Activated naive CD4-positive, alpha-beta T cell treated with anti-CD3 and anti-CD28 coated beads for 36 hours (primary cell): ENCODE measurements at regions of chr6 and their contacts with region 1.

Region 1: DNA sequence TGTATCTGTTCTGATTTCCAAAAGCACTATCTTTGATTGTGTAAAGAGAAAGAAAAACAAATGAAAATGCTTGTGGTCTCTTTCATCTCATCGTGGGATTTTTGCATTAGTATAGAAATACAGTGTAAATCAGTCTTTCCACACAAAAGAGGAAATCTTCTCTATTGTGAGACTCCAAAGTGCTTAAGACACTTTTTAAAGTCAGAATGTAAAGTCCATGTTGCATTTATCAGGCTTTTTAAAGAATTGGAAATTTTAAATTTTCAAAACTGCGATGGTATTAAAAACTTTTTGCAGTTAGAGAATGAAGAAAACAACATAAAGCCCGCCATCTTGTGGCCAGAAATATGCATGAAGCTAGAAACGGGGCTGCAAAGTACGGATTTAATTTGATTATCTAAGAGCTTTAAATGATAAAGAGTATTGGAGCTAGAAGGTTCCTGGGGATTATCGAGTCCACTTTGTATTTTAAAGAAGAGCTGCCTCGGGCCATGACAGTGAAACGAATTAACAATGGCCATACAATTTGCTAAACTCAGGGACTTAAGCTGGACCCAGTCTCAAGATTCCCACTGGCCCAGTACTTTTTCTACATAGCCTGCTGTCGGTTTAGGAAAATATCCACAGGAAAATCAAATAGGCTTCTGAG is 339.6 kb downstream of the ARHGAP18 start:
- DNase-seq: peak; percentile 77
- H3K4me3 Mint-ChIP-seq: no peak overlapping the region
- H3K27ac Mint-ChIP-seq: no peak overlapping the region
- H3K4me1 Mint-ChIP-seq: peaks cover 20% of the 10 kb centered on the region
- H3K27me3 Mint-ChIP-seq: no peaks in the 10 kb centered on the region

Region 2: DNA sequence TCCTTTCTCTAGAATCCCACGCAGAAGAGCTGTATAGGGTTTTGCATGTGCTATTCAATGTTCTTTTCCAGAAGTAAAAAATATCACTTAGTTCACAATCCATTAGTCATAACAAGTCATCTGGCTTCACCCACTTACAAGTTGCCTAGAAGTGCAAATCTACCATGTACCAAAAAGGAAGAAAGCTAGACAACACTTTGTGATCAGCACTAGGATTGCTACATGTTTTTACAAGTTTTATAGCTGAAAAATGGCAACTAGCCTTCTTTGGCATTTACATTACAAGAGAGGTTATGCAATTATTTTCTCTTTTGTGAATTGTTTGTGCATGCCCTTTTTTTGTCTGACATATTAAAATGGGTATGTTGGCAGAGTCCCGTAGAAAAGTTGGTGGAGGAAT is 764.4 kb before region 1 on chr6:
- CTCF ChIA-PET with region 1: no interaction called
- intact Hi-C with region 1: no loop called
- DNase-seq: no peak
- H3K4me3 Mint-ChIP-seq: no peak overlapping the region
- H3K27ac Mint-ChIP-seq: no peak overlapping the region
- H3K4me1 Mint-ChIP-seq: peaks cover 2% of the 10 kb centered on the region
- H3K27me3 Mint-ChIP-seq: peaks cover 8% of the 10 kb centered on the region

Region 3: DNA sequence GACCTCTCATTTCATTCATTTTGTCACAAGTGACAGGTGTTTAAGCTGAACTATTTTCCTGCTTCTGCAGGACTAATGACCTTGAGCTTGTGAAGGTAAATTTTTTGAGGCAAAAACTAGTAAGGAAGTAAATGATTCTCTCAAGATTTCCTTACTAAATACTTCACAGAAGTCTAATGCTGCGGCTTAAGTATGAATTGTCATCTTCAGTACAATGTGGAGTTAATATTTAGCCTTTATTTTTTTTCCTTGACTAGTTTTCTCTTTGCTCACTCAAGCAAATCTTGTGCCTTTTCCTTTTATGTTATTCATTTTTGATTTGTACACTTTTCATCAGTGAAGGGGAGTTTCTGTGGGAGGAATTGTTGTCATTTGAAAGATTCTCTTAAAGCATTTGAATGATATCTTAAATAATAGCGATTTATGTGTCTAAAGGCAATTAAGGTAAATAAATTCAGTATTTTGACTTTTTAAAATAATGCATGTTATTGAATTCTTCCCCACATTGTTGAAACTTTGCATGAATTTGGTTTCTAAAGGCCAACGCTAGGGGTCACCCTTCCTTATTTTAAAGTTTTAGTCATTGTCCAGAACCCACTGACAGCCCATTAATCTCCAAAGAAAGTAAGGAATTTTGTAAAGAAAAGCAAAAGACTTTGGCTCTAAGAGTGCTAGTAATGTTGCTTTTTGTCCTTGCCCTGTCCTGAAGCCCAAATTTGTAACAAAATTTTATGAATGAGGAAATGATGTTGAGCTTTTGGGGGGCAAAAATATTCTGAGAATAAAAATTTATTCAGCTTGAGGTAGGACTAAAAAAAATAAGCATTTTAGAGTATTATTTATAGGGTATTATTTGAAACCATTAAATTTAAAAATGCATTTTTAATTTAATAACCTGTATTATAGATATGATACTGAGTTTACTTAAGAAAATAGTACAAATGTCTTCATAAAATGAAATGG is 644.8 kb before region 1 on chr6:
- CTCF ChIA-PET with region 1: no interaction called
- intact Hi-C with region 1: loop called (anchors 2 kb)
- DNase-seq: peak; percentile 31
- H3K4me3 Mint-ChIP-seq: no peak overlapping the region
- H3K27ac Mint-ChIP-seq: no peak overlapping the region
- H3K4me1 Mint-ChIP-seq: no peaks in the 10 kb centered on the region
- H3K27me3 Mint-ChIP-seq: peaks cover 24% of the 10 kb centered on the region

Region 4: DNA sequence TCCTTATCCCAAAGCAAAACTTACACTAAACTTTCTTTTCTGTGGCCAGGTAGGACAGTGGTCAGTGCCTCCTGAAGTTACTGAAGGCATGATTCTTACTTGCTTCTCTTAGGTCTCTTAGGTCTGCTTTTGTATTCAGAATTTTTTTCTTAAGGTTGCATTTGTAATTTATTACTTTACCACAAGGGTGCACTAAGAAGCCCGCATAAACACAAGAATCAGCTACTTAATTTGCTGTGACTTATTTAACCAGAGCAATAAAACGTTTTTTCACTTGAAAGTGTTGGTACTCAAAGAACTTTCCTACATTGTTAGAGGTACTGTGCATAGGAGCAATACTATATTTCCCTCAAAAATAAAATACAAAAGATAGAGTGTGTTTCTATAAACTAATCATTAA is 562.8 kb before region 1 on chr6:
- CTCF ChIA-PET with region 1: no interaction called
- intact Hi-C with region 1: loop called (anchors 1 kb)
- DNase-seq: no peak
- H3K4me3 Mint-ChIP-seq: no peak overlapping the region
- H3K27ac Mint-ChIP-seq: no peak overlapping the region
- H3K4me1 Mint-ChIP-seq: no peaks in the 10 kb centered on the region
- H3K27me3 Mint-ChIP-seq: peaks cover 9% of the 10 kb centered on the region

Region 5: DNA sequence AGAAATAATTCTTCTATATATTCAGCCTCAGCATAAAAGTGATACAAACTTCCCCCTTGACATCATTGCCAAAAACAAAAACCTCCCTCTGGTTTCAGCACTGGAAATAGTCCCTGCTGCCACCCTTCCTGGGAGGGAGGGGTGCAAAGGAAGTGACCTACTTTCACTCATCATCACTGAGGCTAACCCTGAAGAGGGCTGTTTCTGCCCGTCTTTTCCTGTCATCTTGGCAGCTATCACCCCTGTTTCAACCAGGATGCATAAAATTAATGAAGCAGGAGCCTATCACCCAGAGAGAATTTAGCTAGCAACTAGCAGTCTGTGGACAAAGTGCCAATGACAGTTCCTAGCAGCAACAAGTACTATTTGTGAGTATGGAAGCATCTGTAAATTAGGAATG is 89.6 kb before region 1 on chr6:
- CTCF ChIA-PET with region 1: interaction called, 6 read pairs
- intact Hi-C with region 1: loop called (anchors 2 kb)
- DNase-seq: peak; percentile 76
- H3K4me3 Mint-ChIP-seq: peak overlapping the region; percentile 52
- H3K27ac Mint-ChIP-seq: peak overlapping the region; percentile 10
- H3K4me1 Mint-ChIP-seq: peaks cover 14% of the 10 kb centered on the region
- H3K27me3 Mint-ChIP-seq: no peaks in the 10 kb centered on the region

Region 6: GRCh38 chr6:129567374-129567773 is 197.0 kb after region 1 on chr6:
- CTCF ChIA-PET with region 1: interaction called, 4 read pairs
- intact Hi-C with region 1: loop called (anchors 1 kb)
- DNase-seq: peak; percentile 79
- H3K4me3 Mint-ChIP-seq: no peak overlapping the region
- H3K27ac Mint-ChIP-seq: no peak overlapping the region
- H3K4me1 Mint-ChIP-seq: peaks cover 3% of the 10 kb centered on the region
- H3K27me3 Mint-ChIP-seq: no peaks in the 10 kb centered on the region

Region 7: GRCh38 chr6:129929433-129929832 is 559.0 kb after region 1 on chr6:
- CTCF ChIA-PET with region 1: no interaction called
- intact Hi-C with region 1: no loop called
- DNase-seq: no peak
- H3K4me3 Mint-ChIP-seq: no peak overlapping the region
- H3K27ac Mint-ChIP-seq: no peak overlapping the region
- H3K4me1 Mint-ChIP-seq: no peaks in the 10 kb centered on the region
- H3K27me3 Mint-ChIP-seq: no peaks in the 10 kb centered on the region

Region 8: GRCh38 chr6:130676077-130676772 is 1305.8 kb after region 1 on chr6:
- CTCF ChIA-PET with region 1: no interaction called
- intact Hi-C with region 1: no loop called
- DNase-seq: no peak
- H3K4me3 Mint-ChIP-seq: no peak overlapping the region
- H3K27ac Mint-ChIP-seq: no peak overlapping the region
- H3K4me1 Mint-ChIP-seq: peaks cover 15% of the 10 kb centered on the region
- H3K27me3 Mint-ChIP-seq: no peaks in the 10 kb centered on the region